Sigmoid colon (tissue), 7 donors: ENCODE measurements at regions of chr3 and their contacts with region 1.

Region 1: GRCh38 chr3:150286390-150287147 is 121.5 kb upstream of the TSC22D2 start:
- DNase-seq: no peak
- H3K4me3 ChIP-seq: no peak overlapping the region
- H3K27ac ChIP-seq: no peak overlapping the region
- H3K4me1 ChIP-seq: no peaks in the 10 kb centered on the region
- H3K27me3 ChIP-seq: no peaks in the 10 kb centered on the region
- CTCF ChIP-seq: peak in 3 of 4 experiments; percentile 39 to 61 (median 44)
- EP300 ChIP-seq: no peak
- POLR2A ChIP-seq: no peak

Region 2: GRCh38 chr3:150329408-150329807 is 42.8 kb after region 1 on chr3:
- intact Hi-C with region 1: loop called (anchors 5 kb)
- DNase-seq: no peak
- H3K4me3 ChIP-seq: no peak overlapping the region
- H3K27ac ChIP-seq: no peak overlapping the region
- H3K4me1 ChIP-seq: no peaks in the 10 kb centered on the region
- H3K27me3 ChIP-seq: no peaks in the 10 kb centered on the region
- CTCF ChIP-seq: no peak
- EP300 ChIP-seq: no peak
- POLR2A ChIP-seq: no peak

Region 3: GRCh38 chr3:150428562-150428961 is 142.0 kb after region 1 on chr3:
- intact Hi-C with region 1: no loop called
- DNase-seq: no peak
- H3K4me3 ChIP-seq: no peak overlapping the region
- H3K27ac ChIP-seq: no peak overlapping the region
- H3K4me1 ChIP-seq: peaks cover 0 to 49% (median 17%) of the 10 kb centered on the region in 4 donors
- H3K27me3 ChIP-seq: no peaks in the 10 kb centered on the region
- CTCF ChIP-seq: no peak
- EP300 ChIP-seq: no peak
- POLR2A ChIP-seq: no peak

Region 4: GRCh38 chr3:150443331-150443741 is 156.8 kb after region 1 on chr3:
- intact Hi-C with region 1: no loop called
- DNase-seq: no peak
- H3K4me3 ChIP-seq: no peak overlapping the region
- H3K27ac ChIP-seq: peak overlapping the region in 1 of 4 donors; percentile 0
- H3K4me1 ChIP-seq: peaks cover 0 to 43% (median 25%) of the 10 kb centered on the region in 4 donors
- H3K27me3 ChIP-seq: no peaks in the 10 kb centered on the region
- CTCF ChIP-seq: no peak
- EP300 ChIP-seq: no peak
- POLR2A ChIP-seq: no peak